ENCODE measurements at regions of chr1 and their contacts with region 1.

Region 1: GRCh38 chr1:36285448-36286101 is 20.6 kb upstream of the SH3D21 start:
- H3K4me3 ChIP-seq: no peak overlapping the region
- H3K27ac ChIP-seq: no peak overlapping the region
- H3K4me1 ChIP-seq: no peaks in the 10 kb centered on the region
- CTCF ChIP-seq: peak; percentile 58; the same call in 1 of the 2 replicates

Region 2: DNA sequence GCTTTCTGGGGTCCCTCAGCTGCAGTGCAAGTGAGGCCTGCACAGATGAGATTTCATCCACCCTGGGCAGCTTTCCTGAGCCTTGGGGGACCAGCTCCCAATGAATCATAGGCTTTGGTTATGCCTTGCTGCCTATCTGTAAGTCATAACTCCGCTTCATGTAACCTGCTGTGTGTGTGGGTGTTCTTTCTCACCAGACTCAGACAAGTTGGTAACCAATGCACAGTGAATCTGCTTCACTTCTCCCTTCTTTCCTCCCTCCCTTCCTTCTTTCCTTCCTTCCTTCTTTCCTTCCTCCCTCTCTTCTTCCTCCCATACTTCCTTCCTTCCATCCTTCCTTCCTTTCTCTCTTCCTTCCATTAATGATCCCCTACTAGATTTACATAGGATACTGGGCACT is 609.8 kb before region 1 on chr1:
- CTCF ChIA-PET with region 1: no interaction called
- POLR2A ChIA-PET with region 1: no interaction called
- H3K4me3 ChIP-seq: no peak overlapping the region
- H3K27ac ChIP-seq: no peak overlapping the region
- H3K4me1 ChIP-seq: no peaks in the 10 kb centered on the region
- CTCF ChIP-seq: no peak

Region 3: GRCh38 chr1:36223993-36224536 is 61.5 kb before region 1 on chr1 and contains the start of gene THRAP3:
- CTCF ChIA-PET with region 1: interaction called, 17 read pairs
- POLR2A ChIA-PET with region 1: interaction called, 4 read pairs
- H3K4me3 ChIP-seq: peak within 1 kb of the TSS; percentile 98
- H3K27ac ChIP-seq: peak within 1 kb of the TSS; percentile 76
- H3K4me1 ChIP-seq: no peaks in the 10 kb centered on the region
- CTCF ChIP-seq: no peak

Region 4: DNA sequence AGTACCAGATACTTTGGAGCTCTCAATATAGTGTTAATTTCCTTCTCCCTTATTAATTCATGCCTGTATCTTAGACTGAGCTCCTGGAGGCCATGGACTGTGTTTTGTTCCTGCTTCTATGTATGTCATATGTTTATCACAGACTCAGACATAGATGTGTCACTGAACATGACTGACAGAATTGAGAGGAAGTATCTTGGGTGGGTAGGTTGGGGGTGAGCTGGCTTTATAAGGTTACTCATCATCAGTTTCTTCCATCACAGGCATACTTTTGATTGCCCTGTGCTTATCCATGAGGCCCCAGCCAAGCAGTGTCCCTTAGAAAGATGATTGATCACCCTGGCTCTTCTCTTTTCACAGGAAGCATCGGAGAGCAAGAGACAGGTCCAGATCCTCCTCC is 15.0 kb after region 1 on chr1:
- CTCF ChIA-PET with region 1: interaction called, 12 read pairs
- POLR2A ChIA-PET with region 1: interaction called, 4 read pairs
- H3K4me3 ChIP-seq: no peak overlapping the region
- H3K27ac ChIP-seq: no peak overlapping the region
- H3K4me1 ChIP-seq: no peaks in the 10 kb centered on the region
- CTCF ChIP-seq: no peak

Region 5: DNA sequence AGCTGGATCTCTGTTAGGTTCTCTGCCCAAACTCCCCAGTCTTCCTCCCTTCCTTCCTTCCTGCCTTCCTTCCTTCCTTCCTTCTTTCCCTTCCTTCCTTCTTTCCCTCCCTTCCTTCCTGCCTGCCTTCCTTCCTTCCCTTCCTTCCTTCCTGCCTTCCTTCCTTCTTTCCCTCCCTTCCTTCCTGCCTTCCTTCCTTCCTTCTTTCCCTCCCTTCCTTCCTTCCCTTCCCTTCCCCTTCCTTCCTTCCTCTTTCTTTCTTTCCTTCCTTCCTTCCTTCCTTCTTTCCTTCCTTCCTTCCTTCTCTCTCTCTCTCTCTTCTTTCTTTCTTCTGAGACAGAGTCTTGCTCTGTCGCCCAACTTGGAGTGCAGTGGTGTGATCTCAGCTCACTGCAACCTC is 120.9 kb after region 1 on chr1:
- CTCF ChIA-PET with region 1: no interaction called
- POLR2A ChIA-PET with region 1: no interaction called
- H3K4me3 ChIP-seq: no peak overlapping the region
- H3K27ac ChIP-seq: no peak overlapping the region
- H3K4me1 ChIP-seq: no peaks in the 10 kb centered on the region
- CTCF ChIP-seq: no peak

Region 6: GRCh38 chr1:36463803-36464604 is 178.4 kb after region 1 on chr1 and contains the start of gene MRPS15:
- CTCF ChIA-PET with region 1: no interaction called
- POLR2A ChIA-PET with region 1: no interaction called
- H3K4me3 ChIP-seq: peak within 1 kb of the TSS; percentile 93
- H3K27ac ChIP-seq: peak within 1 kb of the TSS; percentile 56
- H3K4me1 ChIP-seq: no peaks in the 10 kb centered on the region
- CTCF ChIP-seq: peak; percentile 55; the same call in 1 of the 2 replicates

Measured in HEK293 (cell line).